Heart left ventricle (tissue), 16 donors: ENCODE measurements at regions of chr7 and their contacts with region 1.

Region 1: GRCh38 chr7:155524018-155524616 is 22.2 kb downstream of the CNPY1 start:
- DNase-seq: no peak
- ATAC-seq: no peak
- H3K4me3 ChIP-seq: no peak overlapping the region
- H3K27ac ChIP-seq: no peak overlapping the region
- H3K4me1 ChIP-seq: no peaks in the 10 kb centered on the region
- H3K27me3 ChIP-seq: peaks cover 0 to 67% (median 28%) of the 10 kb centered on the region in 9 donors
- CTCF ChIP-seq: peak in 1 of 12 donors; percentile 11
- POLR2A ChIP-seq: no peak

Region 2: GRCh38 chr7:155412537-155413253 is 111.4 kb before region 1 on chr7:
- intact Hi-C with region 1: loop called in 1 of 10 experiments (anchors 10 kb)
- DNase-seq: no peak
- ATAC-seq: peak in 3 of 4 donors; percentile 41 to 55 (median 47)
- H3K4me3 ChIP-seq: no peak overlapping the region
- H3K27ac ChIP-seq: no peak overlapping the region
- H3K4me1 ChIP-seq: no peaks in the 10 kb centered on the region
- H3K27me3 ChIP-seq: peaks cover 5 to 52% (median 16%) of the 10 kb centered on the region in 9 donors
- CTCF ChIP-seq: peak; percentile 32 to 64 (median 52)
- POLR2A ChIP-seq: no peak